OCI-LY7 (cell line): ENCODE measurements at regions of chr1 and their contacts with region 1.

Region 1: DNA sequence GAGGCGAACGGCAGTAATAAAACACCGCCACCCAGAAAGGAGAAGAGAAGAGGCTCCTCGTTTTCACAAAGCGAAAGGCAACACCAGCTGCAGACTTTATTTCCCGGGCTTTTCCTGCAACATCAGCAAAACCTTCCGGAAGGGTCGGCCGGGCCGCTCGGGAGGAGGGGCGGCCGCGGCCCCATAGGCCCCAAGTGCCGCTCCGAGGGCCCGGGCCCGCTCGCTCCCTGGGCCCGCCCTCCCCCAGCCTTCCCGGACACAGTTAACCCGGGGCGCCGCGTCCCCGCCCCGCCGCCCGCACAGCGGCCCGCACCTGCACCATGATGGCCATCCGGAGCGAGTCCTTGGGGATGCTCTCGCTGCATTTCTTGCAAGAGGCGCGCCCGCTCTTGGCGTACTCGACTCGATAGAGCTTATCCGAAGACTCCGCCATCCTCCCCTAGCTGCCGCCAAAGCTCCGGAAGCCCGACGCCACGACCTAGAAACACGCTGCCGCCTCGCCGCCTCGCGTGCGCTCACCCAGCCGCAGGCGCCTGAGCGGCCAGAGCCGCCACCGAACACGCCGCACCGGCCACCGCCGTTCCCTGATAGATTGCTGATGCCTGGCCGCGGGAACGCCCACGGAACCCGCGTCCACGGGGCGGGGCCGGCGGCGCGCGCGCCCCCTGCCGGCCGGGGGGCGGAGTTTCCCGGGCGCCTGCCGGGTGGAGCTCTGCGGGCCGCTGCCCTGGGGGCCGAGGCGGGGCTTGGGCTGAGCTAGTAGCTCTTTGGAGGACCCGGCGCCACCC is at the start of gene PARP1:
- DNase-seq: peak; percentile 98
- H3K4me3 ChIP-seq: peak within 1 kb of the TSS; percentile 91
- H3K27ac ChIP-seq: peak within 1 kb of the TSS; percentile 91
- H3K4me1 ChIP-seq: peaks cover 42% of the 10 kb centered on the region
- CTCF ChIP-seq: peak; percentile 85
- total RNA-seq, gene PARP1: 532 and 610 TPM in 2 replicates

Region 2: GRCh38 chr1:226201029-226201593 is 206.6 kb before region 1 on chr1:
- CTCF ChIA-PET with region 1: interaction called, 3 read pairs
- POLR2A ChIA-PET with region 1: interaction called, 8 read pairs
- intact Hi-C with region 1: loop called (anchors 2 kb)
- DNase-seq: peak; percentile 79
- H3K4me3 ChIP-seq: no peak overlapping the region
- H3K27ac ChIP-seq: peak overlapping the region; percentile 24
- H3K4me1 ChIP-seq: peaks cover 48% of the 10 kb centered on the region
- CTCF ChIP-seq: peak; percentile 91

Region 3: GRCh38 chr1:226355669-226356551 is 51.8 kb before region 1 on chr1:
- CTCF ChIA-PET with region 1: no interaction called
- POLR2A ChIA-PET with region 1: interaction called, 55 read pairs
- intact Hi-C with region 1: loop called (anchors 1 kb)
- DNase-seq: peak; percentile 96
- H3K4me3 ChIP-seq: peak overlapping the region; percentile 50
- H3K27ac ChIP-seq: peak overlapping the region; percentile 98
- H3K4me1 ChIP-seq: peaks cover 76% of the 10 kb centered on the region
- CTCF ChIP-seq: no peak

Region 4: DNA sequence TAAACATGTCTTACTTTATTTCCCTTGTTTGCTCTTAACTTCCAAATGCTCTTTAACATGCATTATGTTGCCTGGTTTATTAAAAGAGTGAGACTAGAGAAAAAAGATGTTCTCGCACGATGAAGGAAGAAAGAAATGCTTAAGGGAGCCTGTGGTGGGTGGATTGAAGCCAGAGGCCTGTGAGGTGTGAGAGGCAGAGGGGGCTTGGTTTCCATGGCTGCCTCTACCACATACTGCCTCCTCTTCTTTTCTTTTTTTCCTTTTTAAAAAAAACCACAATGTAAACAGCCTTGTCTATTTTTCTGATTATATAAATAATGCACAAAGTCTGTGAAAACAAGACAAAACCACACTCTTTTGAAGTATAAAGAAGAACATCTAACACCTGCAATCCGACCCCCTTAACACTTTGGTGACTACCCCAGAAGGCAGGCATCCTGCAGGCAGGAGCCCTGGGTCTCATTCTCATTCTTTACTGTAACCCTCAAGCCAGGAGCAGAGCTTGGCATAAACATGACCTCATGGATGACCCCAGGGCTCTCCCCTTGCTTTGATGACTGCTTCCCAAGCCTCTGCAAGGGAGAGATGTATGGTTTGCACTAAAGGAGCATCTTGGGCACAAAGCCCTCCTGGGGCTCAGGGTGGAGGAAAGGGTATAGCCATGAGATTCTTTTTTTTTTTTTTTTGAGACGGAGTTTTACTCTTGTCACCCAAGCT is 10.3 kb after region 1 on chr1:
- CTCF ChIA-PET with region 1: interaction called, 4 read pairs
- POLR2A ChIA-PET with region 1: interaction called, 106 read pairs
- intact Hi-C with region 1: no loop called
- DNase-seq: no peak
- H3K4me3 ChIP-seq: no peak overlapping the region
- H3K27ac ChIP-seq: no peak overlapping the region
- H3K4me1 ChIP-seq: peaks cover 41% of the 10 kb centered on the region
- CTCF ChIP-seq: no peak

Region 5: DNA sequence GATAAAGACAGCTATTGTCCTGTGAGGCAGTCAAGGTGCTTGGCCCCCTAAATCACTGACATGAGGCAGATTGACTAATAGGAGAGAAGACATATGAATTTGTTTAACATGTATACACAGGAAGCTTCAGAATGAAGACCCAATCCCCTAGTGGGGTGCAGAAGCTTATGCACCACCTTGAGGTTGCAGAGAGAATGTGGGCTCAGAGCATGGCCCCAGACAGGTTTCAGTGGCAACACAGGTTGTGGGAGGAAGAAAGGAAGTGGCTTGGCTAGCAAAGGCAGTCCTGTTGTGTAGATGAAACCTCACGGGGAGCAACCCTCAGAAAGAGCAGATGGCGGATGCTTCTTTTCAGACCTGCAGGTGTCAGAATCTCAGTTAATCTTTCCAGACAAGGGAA is 37.2 kb after region 1 on chr1:
- CTCF ChIA-PET with region 1: interaction called, 11 read pairs
- POLR2A ChIA-PET with region 1: interaction called, 10 read pairs
- intact Hi-C with region 1: loop called (anchors 1 kb)
- DNase-seq: peak; percentile 97
- H3K4me3 ChIP-seq: peak overlapping the region; percentile 42
- H3K27ac ChIP-seq: peak overlapping the region; percentile 93
- H3K4me1 ChIP-seq: peaks cover 58% of the 10 kb centered on the region
- CTCF ChIP-seq: peak; percentile 81

Region 6: DNA sequence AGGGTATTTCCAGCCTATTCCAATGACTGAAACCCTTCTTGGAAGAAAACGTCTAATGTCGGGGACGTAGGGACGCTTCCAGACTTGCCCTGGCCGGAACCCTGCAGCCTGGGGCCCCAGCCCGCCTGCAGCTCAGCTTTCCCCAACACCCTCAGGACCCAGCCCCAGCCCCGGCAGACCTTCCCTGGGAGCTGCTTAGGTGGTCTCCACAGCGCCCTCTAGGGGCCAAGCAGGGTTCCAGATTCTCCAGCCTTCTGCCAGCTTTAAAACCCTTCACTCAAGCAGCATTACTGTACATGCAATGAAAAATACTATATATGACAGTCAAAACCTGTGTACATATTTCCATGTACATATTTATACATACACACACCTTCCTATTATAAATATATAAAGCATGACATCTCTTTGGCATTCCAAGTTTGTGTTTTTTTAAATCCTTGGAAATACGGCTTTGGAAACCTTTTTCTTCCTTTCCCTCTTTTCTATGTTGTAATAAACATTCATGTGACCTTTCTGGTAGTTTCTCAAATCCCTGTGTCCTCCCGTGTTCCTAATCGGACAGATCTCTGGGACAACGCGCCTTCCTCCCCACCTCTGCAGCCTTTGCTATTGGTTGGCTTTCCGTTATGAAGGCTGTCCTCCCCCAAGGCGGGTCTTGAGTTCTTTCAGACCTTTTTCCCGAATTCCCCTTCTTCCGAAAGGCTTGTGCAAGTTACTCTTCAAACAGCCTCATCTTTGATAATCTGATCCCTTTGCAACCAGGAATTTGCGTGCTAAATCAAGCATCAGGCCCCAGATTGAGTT is 201.2 kb after region 1 on chr1:
- CTCF ChIA-PET with region 1: no interaction called
- POLR2A ChIA-PET with region 1: no interaction called
- intact Hi-C with region 1: no loop called
- DNase-seq: peak; percentile 80
- H3K4me3 ChIP-seq: no peak overlapping the region
- H3K27ac ChIP-seq: no peak overlapping the region
- H3K4me1 ChIP-seq: no peaks in the 10 kb centered on the region
- CTCF ChIP-seq: peak; percentile 97

Region 7: DNA sequence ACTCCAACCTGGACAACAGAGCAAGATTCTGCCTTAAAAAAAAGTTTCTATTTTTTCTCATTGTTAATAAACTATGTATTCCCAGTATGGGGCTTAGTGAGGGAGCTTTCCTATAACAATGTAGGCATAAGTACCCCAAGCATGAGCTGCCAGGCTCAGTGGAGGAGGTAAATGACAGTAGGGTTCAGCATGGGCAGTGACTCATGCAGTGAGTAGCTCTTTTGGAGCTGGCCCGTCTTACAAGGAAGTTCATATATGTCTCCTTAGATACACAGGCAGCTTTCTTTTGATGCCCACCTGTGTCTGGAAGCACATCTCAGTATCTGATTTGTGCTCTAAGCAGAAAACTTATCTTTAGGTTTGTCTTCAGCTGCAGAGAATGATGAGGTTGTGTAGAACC is 1213.5 kb after region 1 on chr1:
- CTCF ChIA-PET with region 1: no interaction called
- POLR2A ChIA-PET with region 1: no interaction called
- intact Hi-C with region 1: no loop called
- DNase-seq: no peak
- H3K4me3 ChIP-seq: no peak overlapping the region
- H3K27ac ChIP-seq: no peak overlapping the region
- H3K4me1 ChIP-seq: no peaks in the 10 kb centered on the region
- CTCF ChIP-seq: no peak

Region 8: DNA sequence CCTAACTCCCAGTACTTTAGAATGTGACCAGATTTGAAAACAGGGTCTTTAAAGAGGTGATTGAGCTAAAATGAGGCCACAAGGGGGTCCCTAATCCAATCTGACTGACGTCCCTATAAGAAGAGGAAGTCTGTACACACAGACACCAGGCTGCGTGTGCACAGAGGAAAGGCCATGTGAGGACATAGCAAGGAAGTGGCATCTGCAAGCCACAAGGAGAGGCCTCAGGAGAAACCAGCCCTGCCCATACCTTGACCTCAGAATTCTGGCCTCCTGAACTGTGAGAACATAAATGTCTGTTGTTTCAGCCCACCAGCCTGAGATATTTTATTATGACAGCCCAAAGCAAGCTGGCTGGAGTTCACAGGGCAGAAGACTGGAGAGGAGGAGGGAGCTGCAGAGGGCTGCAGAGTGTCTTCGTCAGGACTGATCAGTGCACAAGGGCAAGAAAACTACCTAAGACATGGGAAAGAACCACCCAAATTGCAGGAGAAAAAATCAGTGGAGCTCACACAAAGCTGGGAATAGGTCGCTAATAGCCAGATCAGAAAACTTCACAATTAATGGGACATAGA is 1554.0 kb after region 1 on chr1:
- CTCF ChIA-PET with region 1: no interaction called
- POLR2A ChIA-PET with region 1: no interaction called
- intact Hi-C with region 1: no loop called
- DNase-seq: peak; percentile 10
- H3K4me3 ChIP-seq: no peak overlapping the region
- H3K27ac ChIP-seq: no peak overlapping the region
- H3K4me1 ChIP-seq: no peaks in the 10 kb centered on the region
- CTCF ChIP-seq: no peak